ENCODE measurements at regions of chr5 and their contacts with region 1.

Region 1: GRCh38 chr5:171913987-171914273 is 92.5 kb downstream of the FBXW11 start:
- DNase-seq: no peak
- H3K4me3 ChIP-seq: no peak overlapping the region
- CTCF ChIP-seq: no peak

Region 2: GRCh38 chr5:171201310-171201709 is 712.6 kb before region 1 on chr5:
- CTCF ChIA-PET with region 1: no interaction called
- POLR2A ChIA-PET with region 1: no interaction called
- DNase-seq: no peak
- H3K4me3 ChIP-seq: no peak overlapping the region
- CTCF ChIP-seq: no peak

Region 3: DNA sequence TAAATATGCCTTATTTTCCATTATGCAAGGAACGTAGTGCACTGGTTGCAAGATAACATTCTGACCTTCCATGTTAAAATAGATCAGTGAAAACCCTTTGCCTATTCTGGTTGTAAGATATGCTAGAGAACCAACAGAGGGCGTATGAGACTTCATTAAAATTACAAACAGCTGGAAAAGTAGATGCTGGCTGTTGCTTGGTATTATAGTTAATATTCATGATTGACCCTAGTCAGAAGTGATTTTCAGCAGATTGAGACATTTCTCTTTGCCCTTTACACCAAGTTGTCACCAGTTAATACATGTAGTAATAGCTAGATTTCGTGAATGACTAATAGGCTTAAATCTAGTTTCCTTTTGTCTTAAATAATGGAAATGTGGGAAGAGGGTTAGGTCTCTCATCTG is 508.3 kb before region 1 on chr5:
- CTCF ChIA-PET with region 1: interaction called, 11 read pairs
- POLR2A ChIA-PET with region 1: no interaction called
- DNase-seq: no peak
- H3K4me3 ChIP-seq: no peak overlapping the region
- CTCF ChIP-seq: peak; percentile 35

Region 4: DNA sequence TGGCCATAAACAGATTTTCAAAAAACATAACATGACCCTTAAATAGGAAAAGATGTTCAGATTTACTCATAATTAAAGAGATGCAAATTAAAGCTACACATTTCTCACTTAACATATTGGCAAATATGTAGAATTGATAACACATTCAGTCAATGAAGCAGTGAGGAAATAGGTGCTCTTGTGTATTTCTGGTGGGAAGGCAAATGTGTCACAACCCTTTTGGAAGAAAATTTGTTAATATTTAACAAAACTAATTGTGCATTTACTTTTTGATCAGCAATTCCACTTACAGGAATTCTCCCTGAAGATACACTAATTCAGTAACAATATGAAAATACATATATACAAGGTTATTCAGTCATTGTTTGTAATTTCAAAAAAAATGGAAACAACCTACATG is 24.4 kb after region 1 on chr5:
- CTCF ChIA-PET with region 1: interaction called, 17 read pairs
- POLR2A ChIA-PET with region 1: no interaction called
- DNase-seq: no peak
- H3K4me3 ChIP-seq: no peak overlapping the region
- CTCF ChIP-seq: no peak

Region 5: DNA sequence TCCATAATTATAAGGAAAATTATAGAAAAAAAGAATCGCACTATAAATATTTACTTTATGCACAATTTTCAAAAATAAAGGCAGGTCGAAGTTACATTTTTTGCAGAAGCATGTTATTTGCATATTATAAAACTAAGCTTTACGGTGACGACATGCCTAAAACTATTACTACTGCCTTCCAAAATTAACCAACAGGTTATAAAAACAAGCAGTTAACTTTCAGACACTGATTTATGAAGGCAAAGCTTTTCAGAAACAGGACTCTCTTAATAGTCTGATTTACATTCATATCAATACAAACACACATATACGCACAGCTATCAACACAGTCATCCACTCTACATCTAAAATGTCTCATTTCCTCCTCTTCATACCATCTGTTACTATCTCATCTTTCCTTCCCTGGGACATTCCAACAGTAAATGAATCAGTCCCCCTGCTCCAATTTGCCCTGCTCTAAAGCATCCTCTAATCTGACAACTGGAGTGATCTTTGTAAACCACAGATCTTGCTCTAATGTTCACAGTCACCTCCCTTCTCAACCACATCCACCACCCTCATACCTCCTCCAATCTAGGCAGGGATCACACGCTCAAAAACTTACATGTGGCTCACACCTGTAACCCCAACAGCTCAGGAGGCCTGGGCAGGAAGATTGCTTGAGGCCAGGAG is 71.0 kb after region 1 on chr5:
- CTCF ChIA-PET with region 1: interaction called, 11 read pairs
- POLR2A ChIA-PET with region 1: no interaction called
- DNase-seq: peak; percentile 61
- H3K4me3 ChIP-seq: no peak overlapping the region
- CTCF ChIP-seq: no peak

Region 6: DNA sequence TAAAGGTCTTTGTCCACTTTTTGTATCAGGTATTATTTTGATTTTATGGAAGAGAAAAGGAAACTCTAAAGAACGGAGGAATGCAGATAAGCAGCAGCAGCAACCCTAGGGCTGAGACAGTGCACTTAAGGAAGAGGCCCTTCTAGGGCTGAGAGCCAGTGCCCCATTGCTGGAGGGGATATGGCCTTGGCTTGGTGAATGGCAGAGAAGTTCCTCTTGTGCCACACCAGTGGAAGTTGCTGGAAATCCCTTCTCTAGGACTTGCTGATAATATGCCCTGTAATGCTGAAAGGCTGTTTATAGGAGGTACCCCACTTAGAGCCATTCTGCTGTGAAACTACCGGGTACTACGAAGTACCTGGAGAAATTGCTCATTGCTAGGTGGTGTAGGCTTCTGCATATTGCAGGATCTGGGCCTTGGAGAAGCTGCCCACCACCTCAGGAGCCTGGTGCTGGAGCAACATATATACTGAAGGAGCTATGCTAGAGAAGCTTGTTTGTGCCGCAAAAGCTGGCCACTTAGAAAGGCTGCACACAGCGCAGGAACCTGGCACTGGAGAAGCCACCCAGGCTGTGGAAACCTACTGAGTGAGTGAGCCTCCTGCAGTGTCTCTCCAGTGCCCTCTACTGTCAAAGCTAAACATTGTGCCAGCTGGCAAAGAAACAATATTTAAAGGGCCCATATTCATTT is 379.3 kb after region 1 on chr5:
- CTCF ChIA-PET with region 1: interaction called, 12 read pairs
- POLR2A ChIA-PET with region 1: no interaction called
- DNase-seq: no peak
- H3K4me3 ChIP-seq: no peak overlapping the region
- CTCF ChIP-seq: peak; percentile 81

Measured in AG04449 (cell line).